ENCODE measurements at regions of chr1 and their contacts with region 1.

Region 1: DNA sequence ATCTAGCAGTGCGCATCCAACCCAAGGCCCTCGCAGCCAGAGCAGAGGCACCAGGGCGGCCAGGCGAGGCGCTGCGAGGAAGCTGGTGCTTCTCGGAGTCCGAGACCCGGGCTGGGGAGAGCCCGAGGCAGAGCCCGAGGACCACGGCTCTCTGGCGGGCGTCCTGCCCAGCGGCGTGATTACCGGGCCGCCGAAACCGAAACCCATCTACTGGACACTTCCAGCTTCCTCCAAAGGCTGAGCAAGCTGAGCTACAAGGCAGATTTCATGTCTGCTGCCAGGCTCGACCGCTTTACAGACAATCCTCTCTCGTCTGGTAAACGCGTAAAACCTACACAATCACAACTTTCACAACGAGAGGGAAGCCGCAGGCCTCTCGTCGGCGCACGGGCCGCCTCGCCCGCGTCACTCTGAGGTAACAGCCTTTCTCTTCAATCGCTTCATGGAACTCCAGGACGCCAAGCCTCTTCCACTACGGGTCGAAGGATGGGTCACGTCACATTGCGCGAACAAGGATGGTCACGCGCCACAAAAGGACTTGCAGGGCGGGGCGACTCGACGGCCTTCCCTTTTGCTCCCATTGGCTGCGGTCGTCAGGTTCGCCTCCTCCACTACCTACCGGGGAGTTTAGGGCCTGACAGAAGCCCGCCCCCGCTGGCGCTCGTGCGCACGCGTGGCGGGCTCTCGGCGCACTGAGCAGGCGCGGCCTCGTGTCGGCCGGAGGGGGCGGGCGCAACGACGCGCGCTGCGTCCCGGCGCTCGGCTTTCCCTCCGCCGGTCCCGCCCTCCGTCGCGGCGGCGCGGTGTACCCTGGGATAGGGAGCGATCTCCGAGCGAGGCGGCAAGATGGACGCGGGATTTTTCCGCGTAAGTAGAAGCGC is at the start of gene SRRM1:
- DNase-seq: peak; percentile 100
- ATAC-seq: peak; percentile 95 to 96
- H3K4me3 ChIP-seq: peak within 1 kb of the TSS; percentile 84 to 97 (median 92)
- H3K27ac ChIP-seq: peak within 1 kb of the TSS; percentile 93 to 99 (median 97)
- H3K4me1 ChIP-seq: peaks cover 23 to 30% of the 10 kb centered on the region in 2 donors
- H3K27me3 ChIP-seq: no peaks in the 10 kb centered on the region
- CTCF ChIP-seq: peak in 2 of 5 experiments; percentile 6 to 8
- POLR2A ChIP-seq: peak; percentile 99 to 100
- total RNA-seq, gene SRRM1: 28.5 to 59.8 (median 40.2) TPM

Region 2: GRCh38 chr1:24201941-24202440 is 440.7 kb before region 1 on chr1:
- in situ Hi-C with region 1: loop called in 2 of 4 experiments (anchors 5 to 25 kb)
- intact Hi-C with region 1: loop called (anchors 5 kb)
- DNase-seq: peak; percentile 46 to 75
- ATAC-seq: peak; percentile 75 to 84
- H3K4me3 ChIP-seq: no peak overlapping the region
- H3K27ac ChIP-seq: peak overlapping the region in 3 of 4 donors; percentile 21 to 36 (median 30)
- H3K4me1 ChIP-seq: peaks cover 0 to 3% of the 10 kb centered on the region in 2 donors
- H3K27me3 ChIP-seq: peaks cover 4 to 8% (median 8%) of the 10 kb centered on the region in 3 donors
- CTCF ChIP-seq: peak; percentile 54 to 82 (median 73)
- POLR2A ChIP-seq: no peak

Region 3: GRCh38 chr1:24415334-24415909 is 227.3 kb before region 1 on chr1 and contains the start of gene NIPAL3:
- in situ Hi-C with region 1: loop called in 2 of 4 experiments (anchors 25 kb)
- intact Hi-C with region 1: loop called (anchors 10 kb)
- DNase-seq: peak; percentile 95 to 98
- ATAC-seq: peak; percentile 94 to 97
- H3K4me3 ChIP-seq: peak within 1 kb of the TSS; percentile 59 to 88 (median 76)
- H3K27ac ChIP-seq: peak within 1 kb of the TSS in 3 of 4 donors; percentile 3 to 50 (median 35)
- H3K4me1 ChIP-seq: peaks cover 5 to 24% of the 10 kb centered on the region in 2 donors
- H3K27me3 ChIP-seq: no peaks in the 10 kb centered on the region
- CTCF ChIP-seq: peak; percentile 72 to 84 (median 82)
- POLR2A ChIP-seq: no peak
- total RNA-seq, gene NIPAL3: 4.3 to 8.7 (median 5.8) TPM

Region 4: DNA sequence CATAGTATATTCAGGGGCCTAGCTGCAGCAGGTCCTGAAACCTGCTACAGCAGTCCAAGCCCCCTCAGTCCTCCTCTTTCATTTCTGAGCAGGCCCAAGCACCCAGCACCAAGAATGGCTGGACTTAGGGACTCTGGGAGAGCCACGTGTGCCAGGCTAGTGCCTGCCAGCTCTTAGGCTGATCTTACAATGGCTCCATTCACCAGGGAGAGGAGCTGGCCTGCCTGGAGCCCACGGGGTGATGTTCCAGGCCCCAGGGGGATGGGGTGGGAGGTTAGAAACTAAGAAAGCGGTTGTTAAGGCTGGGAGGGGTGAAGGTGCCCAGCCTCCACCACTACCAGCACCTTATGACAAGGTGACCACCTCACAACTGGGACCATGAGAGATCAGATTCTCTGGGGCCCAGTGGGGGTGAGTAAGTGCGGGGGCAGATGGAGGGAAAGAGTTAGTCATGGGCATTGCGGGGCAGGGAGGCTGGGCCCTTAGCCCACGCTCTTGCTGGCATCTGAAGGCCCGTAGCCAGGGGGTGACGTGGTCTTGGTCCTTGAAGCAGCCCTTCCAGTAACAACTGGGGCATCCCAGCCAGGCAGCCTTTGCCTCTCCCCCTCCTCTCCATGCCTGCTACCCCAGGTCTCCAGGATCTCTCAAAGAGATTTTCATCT is 72.3 kb after region 1 on chr1:
- in situ Hi-C with region 1: no loop called
- intact Hi-C with region 1: no loop called
- DNase-seq: no peak
- ATAC-seq: no peak
- H3K4me3 ChIP-seq: no peak overlapping the region
- H3K27ac ChIP-seq: no peak overlapping the region
- H3K4me1 ChIP-seq: peaks cover 0 to 11% of the 10 kb centered on the region in 2 donors
- H3K27me3 ChIP-seq: no peaks in the 10 kb centered on the region
- CTCF ChIP-seq: no peak
- POLR2A ChIP-seq: no peak

Region 5: DNA sequence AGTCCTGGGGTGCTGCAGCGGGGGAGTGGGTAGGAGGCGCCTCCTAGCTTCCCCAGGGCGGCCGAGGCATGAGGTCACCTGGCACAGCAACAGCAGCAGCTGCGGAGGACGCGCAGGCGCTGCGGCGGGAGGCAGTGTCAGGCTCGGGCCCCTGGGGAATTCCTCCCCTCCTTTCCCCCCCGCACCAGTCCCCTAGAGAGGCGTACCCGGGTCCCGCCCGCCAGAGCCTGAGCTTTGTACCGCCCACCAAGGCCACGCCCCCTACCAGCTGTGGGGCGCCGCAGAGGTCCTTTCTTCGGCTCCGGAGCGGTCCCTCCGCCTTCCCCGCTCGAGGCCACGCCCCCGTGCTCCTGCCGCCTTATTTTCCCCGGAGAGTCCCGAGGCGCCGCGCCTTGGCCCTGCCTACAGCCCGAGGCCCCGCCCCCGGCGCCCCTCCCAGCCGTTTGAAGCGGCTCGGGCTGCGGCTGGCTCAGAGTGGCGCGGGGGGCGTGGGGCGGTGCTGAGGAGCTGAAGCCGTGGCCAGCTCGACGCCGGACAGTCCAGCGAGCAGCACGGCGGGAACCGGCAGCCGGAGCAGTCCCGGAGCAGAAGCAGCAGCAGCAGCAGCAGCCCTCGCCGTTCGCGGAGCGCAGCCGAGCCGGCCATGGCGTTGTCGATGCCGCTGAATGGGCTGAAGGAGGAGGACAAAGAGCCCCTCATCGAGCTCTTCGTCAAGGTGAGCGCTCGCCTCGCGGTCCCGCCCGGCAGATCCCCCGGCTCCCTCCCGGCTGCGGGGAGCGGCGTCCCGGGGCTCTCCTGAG is 102.4 kb after region 1 on chr1 and contains the start of gene CLIC4:
- in situ Hi-C with region 1: no loop called
- intact Hi-C with region 1: loop called (anchors 1 kb)
- DNase-seq: peak; percentile 98
- ATAC-seq: peak; percentile 88 to 89
- H3K4me3 ChIP-seq: peak within 1 kb of the TSS; percentile 63 to 90 (median 68)
- H3K27ac ChIP-seq: peak within 1 kb of the TSS; percentile 78 to 89 (median 82)
- H3K4me1 ChIP-seq: no peaks in the 10 kb centered on the region
- H3K27me3 ChIP-seq: peaks cover 0 to 3% (median 0%) of the 10 kb centered on the region in 3 donors
- CTCF ChIP-seq: peak in 3 of 5 experiments; percentile 26 to 49 (median 46)
- POLR2A ChIP-seq: peak; percentile 92 to 97
- total RNA-seq, gene CLIC4: 37.3 to 74.5 (median 45.6) TPM

Region 6: DNA sequence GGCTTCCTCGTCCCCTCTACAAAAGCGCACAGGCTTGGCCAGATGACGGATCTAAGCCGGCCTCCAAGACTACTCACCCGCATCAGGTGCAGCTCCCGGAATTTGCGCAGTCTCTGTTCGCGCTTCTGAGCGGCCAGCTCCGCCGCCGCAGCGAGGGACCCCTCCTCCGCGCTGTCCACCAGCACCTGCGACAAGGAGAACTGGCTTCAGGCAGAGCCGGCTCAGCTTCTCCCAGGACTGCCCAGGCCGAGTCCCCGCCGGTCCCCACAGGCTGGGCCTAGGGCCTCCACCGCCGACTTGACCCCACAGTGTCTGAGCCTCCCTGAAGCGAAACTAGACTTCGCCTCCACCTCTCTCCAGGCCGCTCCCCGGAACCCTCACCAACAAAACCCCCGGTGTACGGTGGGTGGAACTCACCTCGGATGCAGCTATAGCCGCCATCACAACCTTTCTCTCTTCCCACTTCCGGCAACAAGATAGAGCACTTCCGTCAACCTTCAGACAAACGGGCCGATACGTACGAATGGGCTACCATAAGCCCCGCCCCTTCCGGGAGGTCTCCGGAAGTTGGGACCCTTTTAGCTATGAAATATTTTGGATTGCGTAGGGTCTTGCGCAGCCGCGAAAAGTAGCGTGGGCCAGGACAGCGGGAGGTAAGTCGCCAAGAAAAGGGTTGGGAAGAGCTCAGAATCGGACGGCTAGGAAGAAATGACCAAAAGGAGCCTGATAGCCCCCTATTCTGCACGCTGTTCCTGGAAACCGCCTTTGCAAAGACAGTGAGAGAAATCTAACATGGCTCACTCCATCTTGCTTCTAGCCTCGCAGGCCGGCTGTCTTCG is 589.5 kb after region 1 on chr1 and contains the start of gene SYF2:
- in situ Hi-C with region 1: no loop called
- intact Hi-C with region 1: loop called (anchors 5 kb)
- DNase-seq: peak; percentile 90 to 93
- ATAC-seq: peak; percentile 84 to 90
- H3K4me3 ChIP-seq: peak within 1 kb of the TSS; percentile 61 to 89 (median 78)
- H3K27ac ChIP-seq: peak within 1 kb of the TSS; percentile 86 to 97 (median 92)
- H3K4me1 ChIP-seq: peaks cover 35 to 43% of the 10 kb centered on the region in 2 donors
- H3K27me3 ChIP-seq: no peaks in the 10 kb centered on the region
- CTCF ChIP-seq: no peak
- POLR2A ChIP-seq: peak; percentile 81 to 85
- total RNA-seq, gene SYF2: 49.1 to 67.4 (median 58.3) TPM

Region 7: GRCh38 chr1:25997828-25998761 is 1355.4 kb after region 1 on chr1 and contains the start of gene PAFAH2:
- in situ Hi-C with region 1: no loop called
- intact Hi-C with region 1: loop called (anchors 10 kb)
- DNase-seq: peak; percentile 97 to 98
- ATAC-seq: peak; percentile 96 to 98
- H3K4me3 ChIP-seq: peak within 1 kb of the TSS; percentile 57 to 86 (median 73)
- H3K27ac ChIP-seq: peak within 1 kb of the TSS; percentile 88 to 96 (median 92)
- H3K4me1 ChIP-seq: peaks cover 17 to 25% of the 10 kb centered on the region in 2 donors
- H3K27me3 ChIP-seq: no peaks in the 10 kb centered on the region
- CTCF ChIP-seq: peak; percentile 94 to 100 (median 99)
- POLR2A ChIP-seq: peak in 1 of 2 donors; percentile 63
- total RNA-seq, gene PAFAH2: 9.0 to 35.5 (median 16.1) TPM

Measured in gastrocnemius medialis (tissue), 4 donors.